CD4-positive, alpha-beta memory T cell (primary cell): ENCODE measurements at regions of chr7 and their contacts with region 1.

Region 1: DNA sequence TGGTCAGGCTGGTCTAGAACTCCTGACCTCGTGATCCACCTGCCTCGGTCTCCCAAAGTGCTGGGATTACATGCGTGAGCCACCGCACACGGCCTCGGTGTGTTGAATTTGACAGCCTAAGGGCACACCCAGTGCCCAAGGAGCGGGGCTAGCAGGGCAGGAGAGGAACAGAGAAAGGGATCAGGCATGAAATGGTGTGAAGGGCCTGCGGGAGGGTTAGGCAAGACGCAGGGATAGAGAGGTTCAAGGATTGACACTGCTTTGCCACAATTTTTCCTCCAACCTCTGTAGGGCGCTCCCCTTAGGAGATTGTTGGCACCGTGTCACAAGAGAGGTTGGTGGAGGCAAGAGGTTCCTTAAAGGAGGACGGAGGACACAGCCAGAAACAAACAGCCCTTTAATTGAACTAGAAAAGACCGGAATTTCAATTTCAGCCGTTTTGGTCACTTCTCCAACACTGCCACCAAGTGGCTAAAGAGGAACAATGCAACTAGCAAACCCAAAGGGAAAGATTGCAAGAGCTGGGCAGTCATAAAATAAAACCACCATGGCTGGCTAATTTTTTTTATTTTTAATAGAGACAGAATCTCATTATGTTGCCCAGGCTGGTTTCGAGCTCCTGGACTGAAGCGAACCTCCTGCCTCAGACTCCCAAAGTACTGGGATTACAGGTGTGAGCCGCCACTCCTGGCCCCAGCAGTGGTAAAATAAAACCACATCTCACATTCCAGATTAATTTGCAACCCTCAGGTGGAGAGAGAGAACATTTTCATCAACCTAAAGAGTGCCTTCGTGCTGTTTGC is 6.9 kb upstream of the CREB3L2 start:
- DNase-seq: peak in 4 of 5 donors; percentile 50 to 60 (median 55)
- H3K4me3 ChIP-seq: no peak overlapping the region
- H3K4me3 Mint-ChIP-seq: peak overlapping the region in 2 of 8 donors; percentile 39 to 68
- H3K27ac ChIP-seq: no peak overlapping the region
- H3K27ac Mint-ChIP-seq: peak overlapping the region in 1 of 7 donors; percentile 57
- H3K4me1 ChIP-seq: no peaks in the 10 kb centered on the region
- H3K4me1 Mint-ChIP-seq: peaks cover 0 to 4% (median 3%) of the 10 kb centered on the region in 4 donors
- H3K27me3 ChIP-seq: no peaks in the 10 kb centered on the region
- H3K27me3 Mint-ChIP-seq: no peaks in the 10 kb centered on the region

Region 2: DNA sequence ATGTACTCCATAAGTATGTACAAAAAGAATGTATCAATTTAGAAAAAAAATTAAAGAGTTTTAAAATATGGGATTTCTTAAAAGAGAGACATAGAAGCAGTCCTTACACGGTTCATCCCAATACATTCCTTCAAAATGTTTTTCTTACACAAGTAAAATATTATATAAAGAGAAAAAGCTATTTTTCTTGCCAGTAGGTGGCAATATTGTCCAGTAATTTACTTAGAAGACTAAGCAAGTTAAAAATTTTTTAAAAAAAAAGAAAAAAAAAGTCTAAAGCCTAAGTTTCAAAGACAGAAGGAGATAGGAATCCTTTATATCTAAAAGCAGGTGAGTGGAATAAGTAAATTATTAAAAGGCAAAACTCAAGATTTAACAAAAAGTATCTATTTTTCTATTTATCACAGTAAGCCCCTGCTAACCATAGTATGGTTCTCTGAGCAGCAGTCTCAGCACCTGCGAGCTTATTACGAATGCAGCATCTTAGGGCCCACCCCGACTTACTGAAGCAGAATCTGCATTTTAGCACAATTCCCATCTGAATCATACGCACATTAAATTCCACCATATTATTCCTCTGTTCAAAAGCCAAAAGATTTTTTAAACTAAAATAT is 402.6 kb before region 1 on chr7:
- CTCF ChIA-PET with region 1: interaction called, 3 read pairs
- POLR2A ChIA-PET with region 1: no interaction called
- intact Hi-C with region 1: loop called (anchors 2 kb)
- DNase-seq: peak in 4 of 5 donors; percentile 7 to 11 (median 8)
- H3K4me3 ChIP-seq: no peak overlapping the region
- H3K4me3 Mint-ChIP-seq: no peak overlapping the region
- H3K27ac ChIP-seq: no peak overlapping the region
- H3K27ac Mint-ChIP-seq: no peak overlapping the region
- H3K4me1 ChIP-seq: no peaks in the 10 kb centered on the region
- H3K4me1 Mint-ChIP-seq: no peaks in the 10 kb centered on the region
- H3K27me3 ChIP-seq: no peaks in the 10 kb centered on the region
- H3K27me3 Mint-ChIP-seq: peaks cover 5% of the 10 kb centered on the region in 2 donors

Region 3: GRCh38 chr7:137656227-137656849 is 352.4 kb before region 1 on chr7:
- CTCF ChIA-PET with region 1: interaction called, 12 read pairs
- POLR2A ChIA-PET with region 1: no interaction called
- intact Hi-C with region 1: loop called (anchors 1 kb)
- DNase-seq: peak; percentile 20 to 59 (median 32)
- H3K4me3 ChIP-seq: no peak overlapping the region
- H3K4me3 Mint-ChIP-seq: no peak overlapping the region
- H3K27ac ChIP-seq: no peak overlapping the region
- H3K27ac Mint-ChIP-seq: no peak overlapping the region
- H3K4me1 ChIP-seq: no peaks in the 10 kb centered on the region
- H3K4me1 Mint-ChIP-seq: peaks cover 0 to 4% (median 0%) of the 10 kb centered on the region in 4 donors
- H3K27me3 ChIP-seq: no peaks in the 10 kb centered on the region
- H3K27me3 Mint-ChIP-seq: peaks cover 5% of the 10 kb centered on the region in 2 donors

Region 4: GRCh38 chr7:137810248-137810647 is 198.5 kb before region 1 on chr7:
- CTCF ChIA-PET with region 1: no interaction called
- POLR2A ChIA-PET with region 1: no interaction called
- intact Hi-C with region 1: no loop called
- DNase-seq: no peak
- H3K4me3 ChIP-seq: no peak overlapping the region
- H3K4me3 Mint-ChIP-seq: no peak overlapping the region
- H3K27ac ChIP-seq: no peak overlapping the region
- H3K27ac Mint-ChIP-seq: no peak overlapping the region
- H3K4me1 ChIP-seq: no peaks in the 10 kb centered on the region
- H3K4me1 Mint-ChIP-seq: no peaks in the 10 kb centered on the region
- H3K27me3 ChIP-seq: no peaks in the 10 kb centered on the region
- H3K27me3 Mint-ChIP-seq: peaks cover 9 to 18% of the 10 kb centered on the region in 2 donors

Region 5: DNA sequence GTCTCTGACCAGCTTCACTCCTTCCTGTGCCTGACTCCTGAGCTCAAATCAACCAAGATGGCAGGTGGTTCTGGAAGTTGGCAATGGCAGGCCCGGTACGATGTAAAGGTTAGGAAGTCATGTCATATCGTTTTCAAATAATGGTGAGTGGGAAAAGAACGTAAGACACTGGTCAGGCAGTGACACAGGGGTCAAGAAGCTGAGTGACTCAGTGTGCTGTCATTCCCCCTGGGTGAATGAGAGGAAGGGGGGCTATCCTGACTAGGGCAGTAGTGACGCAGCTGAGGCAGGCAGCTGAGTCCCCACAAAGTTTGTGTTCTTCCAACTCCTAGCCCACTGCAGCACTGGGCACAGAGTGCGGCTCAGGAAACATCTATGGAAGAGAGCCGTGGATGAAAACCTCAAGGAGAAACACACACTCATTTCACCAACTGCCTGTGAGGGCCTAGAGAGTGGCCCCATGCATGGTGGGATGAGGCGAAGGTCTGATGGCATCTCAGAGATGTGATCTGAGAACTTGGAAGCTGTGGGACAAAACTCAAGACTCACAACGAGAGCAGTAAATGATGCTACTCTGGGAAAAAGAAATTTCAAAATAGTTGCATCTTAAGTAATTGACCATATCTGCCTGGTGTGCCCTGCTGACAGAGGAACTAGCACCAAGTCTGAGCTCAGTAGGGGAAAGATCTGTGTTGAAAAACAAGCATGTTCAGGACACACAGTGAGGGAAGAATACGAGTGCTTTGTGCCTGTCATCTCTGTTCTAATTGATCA is 30.1 kb before region 1 on chr7:
- CTCF ChIA-PET with region 1: interaction called, 13 read pairs
- POLR2A ChIA-PET with region 1: no interaction called
- intact Hi-C with region 1: no loop called
- DNase-seq: no peak
- H3K4me3 ChIP-seq: no peak overlapping the region
- H3K4me3 Mint-ChIP-seq: no peak overlapping the region
- H3K27ac ChIP-seq: no peak overlapping the region
- H3K27ac Mint-ChIP-seq: peak overlapping the region in 2 of 7 donors; percentile 39 to 63
- H3K4me1 ChIP-seq: no peaks in the 10 kb centered on the region
- H3K4me1 Mint-ChIP-seq: peaks cover 8 to 43% (median 19%) of the 10 kb centered on the region in 4 donors
- H3K27me3 ChIP-seq: no peaks in the 10 kb centered on the region
- H3K27me3 Mint-ChIP-seq: no peaks in the 10 kb centered on the region

Region 6: GRCh38 chr7:137992550-137993394 is 16.0 kb before region 1 on chr7:
- CTCF ChIA-PET with region 1: interaction called, 13 read pairs
- POLR2A ChIA-PET with region 1: no interaction called
- intact Hi-C with region 1: no loop called
- DNase-seq: no peak
- H3K4me3 ChIP-seq: no peak overlapping the region
- H3K4me3 Mint-ChIP-seq: peak overlapping the region in 6 of 8 donors; percentile 13 to 77 (median 46)
- H3K27ac ChIP-seq: no peak overlapping the region
- H3K27ac Mint-ChIP-seq: peak overlapping the region in 5 of 7 donors; percentile 5 to 54 (median 31)
- H3K4me1 ChIP-seq: peaks cover 28% of the 10 kb centered on the region
- H3K4me1 Mint-ChIP-seq: peaks cover 24 to 48% (median 36%) of the 10 kb centered on the region in 4 donors
- H3K27me3 ChIP-seq: no peaks in the 10 kb centered on the region
- H3K27me3 Mint-ChIP-seq: no peaks in the 10 kb centered on the region